AG04450 (cell line): ENCODE measurements at regions of chr17 and their contacts with region 1.

Region 1: DNA sequence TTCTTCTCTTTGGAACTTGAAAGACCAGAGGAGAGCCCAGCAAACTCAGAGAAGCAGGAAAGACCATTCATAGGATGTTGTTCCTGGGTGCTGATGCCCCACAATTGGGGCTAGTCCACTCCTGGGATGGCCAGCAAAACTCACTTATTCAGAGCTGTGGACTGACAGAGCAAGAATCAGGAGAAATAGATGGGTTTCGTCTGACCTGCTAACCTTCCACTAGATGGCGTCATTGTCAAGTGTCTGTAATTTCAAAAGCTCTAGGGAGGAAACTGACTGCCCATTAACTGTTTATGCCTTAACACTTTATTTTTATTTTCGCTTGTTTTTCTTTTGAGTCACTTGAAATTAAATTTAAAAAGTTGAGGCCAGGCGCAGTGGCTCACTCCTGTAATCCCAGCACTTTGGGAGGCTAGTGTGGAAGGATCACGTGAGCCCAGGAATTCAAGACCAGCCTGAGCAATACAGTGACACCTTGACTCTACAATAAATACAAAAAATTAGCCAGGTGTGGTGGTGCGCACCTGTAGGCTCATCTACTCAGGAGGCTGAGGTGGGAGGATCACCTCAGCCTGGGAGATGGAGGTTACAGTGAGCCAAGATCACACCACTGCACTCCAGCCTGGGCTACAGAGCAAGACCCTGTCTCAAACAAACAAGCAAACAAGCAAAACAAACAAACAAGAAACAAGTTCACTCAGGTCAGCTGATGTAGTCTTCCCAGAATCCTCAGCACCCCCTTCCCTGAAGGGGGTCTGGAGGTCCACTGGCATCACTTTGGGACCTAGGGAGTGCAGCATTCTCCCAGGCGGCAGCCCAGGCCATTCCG is 28.6 kb upstream of the MILR1 start:
- DNase-seq: peak; percentile 67
- H3K4me3 ChIP-seq: no peak overlapping the region
- H3K27ac ChIP-seq: no peak overlapping the region
- H3K27me3 ChIP-seq: peaks cover 12% of the 10 kb centered on the region
- CTCF ChIP-seq: peak; percentile 77

Region 2: GRCh38 chr17:64148714-64149178 is 271.6 kb before region 1 on chr17:
- CTCF ChIA-PET with region 1: no interaction called
- POLR2A ChIA-PET with region 1: no interaction called
- DNase-seq: no peak
- H3K4me3 ChIP-seq: no peak overlapping the region
- H3K27ac ChIP-seq: peak overlapping the region; percentile 34
- H3K27me3 ChIP-seq: no peaks in the 10 kb centered on the region
- CTCF ChIP-seq: no peak

Region 3: GRCh38 chr17:64306850-64307463 is 113.4 kb before region 1 on chr17:
- CTCF ChIA-PET with region 1: interaction called, 97 read pairs
- POLR2A ChIA-PET with region 1: no interaction called
- DNase-seq: peak; percentile 44
- H3K4me3 ChIP-seq: no peak overlapping the region
- H3K27ac ChIP-seq: no peak overlapping the region
- H3K27me3 ChIP-seq: peaks cover 17% of the 10 kb centered on the region
- CTCF ChIP-seq: peak; percentile 80

Region 4: GRCh38 chr17:64320613-64321553 is 99.5 kb before region 1 on chr17:
- CTCF ChIA-PET with region 1: interaction called, 104 read pairs
- POLR2A ChIA-PET with region 1: no interaction called
- DNase-seq: peak; percentile 30
- H3K4me3 ChIP-seq: no peak overlapping the region
- H3K27ac ChIP-seq: no peak overlapping the region
- H3K27me3 ChIP-seq: peaks cover 28% of the 10 kb centered on the region
- CTCF ChIP-seq: peak; percentile 77

Region 5: DNA sequence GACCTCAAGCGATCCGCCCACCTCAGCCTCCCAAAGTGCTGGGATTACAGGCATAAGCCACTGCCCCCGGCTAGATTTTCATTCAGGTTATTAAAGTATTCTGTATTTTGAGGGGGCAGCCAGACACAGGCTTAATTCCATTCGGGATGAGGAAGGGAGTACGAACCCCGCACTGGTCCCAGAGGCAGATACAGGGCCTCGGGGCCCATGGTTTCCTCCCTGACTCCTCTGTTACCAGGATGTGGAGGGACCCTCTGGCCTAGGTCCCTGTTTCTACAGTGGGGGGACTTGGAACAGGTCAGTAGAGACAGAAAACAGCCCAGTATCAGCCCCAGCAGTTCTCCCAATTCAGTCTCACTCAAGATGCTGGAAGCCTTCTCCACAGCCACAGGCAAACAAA is 71.7 kb before region 1 on chr17:
- CTCF ChIA-PET with region 1: interaction called, 11 read pairs
- POLR2A ChIA-PET with region 1: no interaction called
- DNase-seq: no peak
- H3K4me3 ChIP-seq: no peak overlapping the region
- H3K27ac ChIP-seq: no peak overlapping the region
- H3K27me3 ChIP-seq: peaks cover 12% of the 10 kb centered on the region
- CTCF ChIP-seq: no peak

Region 6: GRCh38 chr17:64479650-64480049 is 59.3 kb after region 1 on chr17:
- CTCF ChIA-PET with region 1: interaction called, 12 read pairs
- POLR2A ChIA-PET with region 1: no interaction called
- DNase-seq: no peak
- H3K4me3 ChIP-seq: no peak overlapping the region
- H3K27ac ChIP-seq: no peak overlapping the region
- H3K27me3 ChIP-seq: no peaks in the 10 kb centered on the region
- CTCF ChIP-seq: no peak

Region 7: GRCh38 chr17:64506576-64507477 is 86.5 kb after region 1 on chr17 and contains the start of gene CEP95:
- CTCF ChIA-PET with region 1: interaction called, 26 read pairs
- POLR2A ChIA-PET with region 1: interaction called, 9 read pairs
- DNase-seq: peak; percentile 98
- H3K4me3 ChIP-seq: peak within 1 kb of the TSS; percentile 94
- H3K27ac ChIP-seq: peak within 1 kb of the TSS; percentile 99
- H3K27me3 ChIP-seq: no peaks in the 10 kb centered on the region
- CTCF ChIP-seq: no peak
- polyA plus RNA-seq, gene CEP95: 18.6 and 29.8 TPM in 2 replicates

Region 8: DNA sequence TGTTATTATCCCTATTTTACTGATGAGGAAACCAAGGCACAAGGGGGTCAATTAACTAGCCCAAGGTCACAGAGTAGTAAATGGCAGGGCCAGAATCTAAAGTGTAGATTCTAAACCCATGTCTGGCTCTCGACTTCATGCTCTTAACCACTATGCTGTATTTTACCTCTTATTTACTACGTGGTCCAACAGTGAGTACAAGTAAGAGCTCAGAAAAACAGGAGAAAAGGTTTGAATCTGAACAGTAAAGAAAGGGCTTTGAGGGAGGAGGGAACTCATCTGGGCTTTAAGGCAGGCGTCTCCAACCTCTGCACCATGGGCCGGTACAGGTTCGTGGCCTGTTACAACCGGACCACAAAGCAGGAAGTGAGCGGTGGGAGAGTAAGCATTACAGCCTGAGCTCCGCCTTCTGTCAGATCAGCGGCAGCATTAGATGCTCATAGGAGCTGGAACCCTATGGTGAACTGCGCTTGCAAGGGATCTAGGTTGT is 178.9 kb after region 1 on chr17:
- CTCF ChIA-PET with region 1: no interaction called
- POLR2A ChIA-PET with region 1: no interaction called
- DNase-seq: no peak
- H3K4me3 ChIP-seq: no peak overlapping the region
- H3K27ac ChIP-seq: no peak overlapping the region
- H3K27me3 ChIP-seq: no peaks in the 10 kb centered on the region
- CTCF ChIP-seq: no peak